ENCODE measurements at regions of chr19 and their contacts with region 1.

Region 1: DNA sequence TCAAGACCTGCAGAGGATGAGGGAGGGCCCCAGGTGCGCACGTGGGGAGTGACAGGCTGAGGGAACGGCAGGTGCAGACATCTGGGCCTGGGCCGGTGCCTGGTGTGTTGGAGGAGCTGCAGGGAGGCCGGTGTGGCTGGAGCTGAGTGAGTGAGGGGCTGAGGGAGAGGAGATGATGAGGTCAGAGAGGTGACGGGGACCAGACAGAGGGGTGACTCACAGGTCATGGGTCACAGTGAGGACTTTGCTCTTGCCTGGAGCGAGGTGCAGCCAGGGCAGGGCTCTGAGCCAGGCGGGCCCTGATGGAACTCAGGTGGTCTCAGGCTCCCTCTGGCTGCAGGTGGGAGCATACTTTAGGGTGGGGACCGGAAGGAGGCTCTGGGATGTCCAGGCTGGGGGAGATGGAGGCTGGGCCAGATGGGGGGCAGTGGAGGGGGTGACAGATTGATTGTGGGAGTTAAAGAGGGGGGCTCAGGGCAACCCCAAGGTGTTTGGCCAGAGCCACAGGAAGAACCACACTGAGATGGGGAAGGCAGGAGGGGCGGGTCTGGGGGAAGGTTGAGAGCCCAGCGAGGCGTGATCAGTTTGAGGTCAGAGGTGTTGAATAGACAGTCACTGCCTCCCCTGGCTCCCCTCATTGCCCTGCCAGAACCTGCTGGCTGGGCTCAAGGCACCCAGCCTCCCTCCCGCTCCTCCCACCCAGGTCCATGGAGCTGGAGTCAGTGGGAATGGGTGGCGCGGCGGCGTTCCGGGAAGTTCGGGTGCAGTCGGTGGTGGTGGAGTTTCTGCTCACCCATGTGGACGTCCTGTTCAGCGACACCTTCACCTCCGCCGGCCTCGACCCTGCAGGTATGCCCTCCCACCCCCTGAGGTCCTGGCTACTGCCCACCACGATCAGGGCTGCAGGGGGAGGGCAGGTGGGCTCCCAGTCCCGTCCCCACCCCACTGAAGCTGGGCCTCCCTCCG is 8.4 kb downstream of the ARHGAP33 start:
- DNase-seq: peak; percentile 64
- ATAC-seq: peak; percentile 39
- H3K4me3 Mint-ChIP-seq: peak overlapping the region; percentile 65
- H3K27ac Mint-ChIP-seq: peak overlapping the region; percentile 5; the same call in 1 of the 2 replicates
- H3K4me1 Mint-ChIP-seq: peaks cover 29% of the 10 kb centered on the region
- H3K27me3 Mint-ChIP-seq: no peaks in the 10 kb centered on the region
- CTCF ChIP-seq: no peak

Region 2: DNA sequence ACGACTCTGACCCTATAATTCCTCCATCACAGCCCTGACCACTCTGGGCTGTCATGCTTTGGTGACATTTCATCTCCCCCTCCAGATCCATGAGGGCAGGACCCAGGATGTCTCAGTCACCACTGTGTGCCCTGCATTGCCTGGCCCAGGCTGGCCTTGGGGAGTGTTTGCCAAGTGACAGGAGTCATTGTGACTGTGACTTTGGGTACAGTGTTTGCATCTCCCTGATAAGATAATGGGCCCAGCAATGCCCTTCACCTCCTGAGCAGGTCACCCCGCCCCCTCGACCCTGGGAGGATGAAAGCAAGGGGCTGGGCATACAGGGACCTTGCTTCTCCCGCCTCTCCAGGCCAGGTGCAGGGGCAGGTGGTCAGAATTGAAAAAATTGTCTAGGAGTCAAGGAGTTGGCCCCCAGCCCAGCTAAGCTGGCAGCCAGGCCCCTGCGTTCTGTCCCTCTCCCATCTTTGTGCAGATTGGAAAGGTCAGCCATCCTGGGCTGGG is 214.4 kb before region 1 on chr19:
- CTCF ChIA-PET with region 1: no interaction called
- POLR2A ChIA-PET with region 1: no interaction called
- DNase-seq: no peak
- ATAC-seq: no peak
- H3K4me3 Mint-ChIP-seq: no peak overlapping the region
- H3K27ac Mint-ChIP-seq: no peak overlapping the region
- H3K4me1 Mint-ChIP-seq: peaks cover 7% of the 10 kb centered on the region
- H3K27me3 Mint-ChIP-seq: peaks cover 18% of the 10 kb centered on the region
- CTCF ChIP-seq: no peak

Region 3: GRCh38 chr19:35618857-35619256 is 164.9 kb before region 1 on chr19:
- CTCF ChIA-PET with region 1: no interaction called
- POLR2A ChIA-PET with region 1: no interaction called
- DNase-seq: peak; percentile 52
- ATAC-seq: peak; percentile 77
- H3K4me3 Mint-ChIP-seq: no peak overlapping the region
- H3K27ac Mint-ChIP-seq: no peak overlapping the region
- H3K4me1 Mint-ChIP-seq: no peaks in the 10 kb centered on the region
- H3K27me3 Mint-ChIP-seq: no peaks in the 10 kb centered on the region
- CTCF ChIP-seq: no peak

Region 4: GRCh38 chr19:35702223-35703012 is 81.3 kb before region 1 on chr19:
- CTCF ChIA-PET with region 1: interaction called, 11 read pairs
- POLR2A ChIA-PET with region 1: interaction called, 3 read pairs
- DNase-seq: peak; percentile 96
- ATAC-seq: peak; percentile 96
- H3K4me3 Mint-ChIP-seq: peak overlapping the region; percentile 85
- H3K27ac Mint-ChIP-seq: peak overlapping the region; percentile 98
- H3K4me1 Mint-ChIP-seq: no peaks in the 10 kb centered on the region; the same call in 1 of the 2 replicates
- H3K27me3 Mint-ChIP-seq: peaks cover 44% of the 10 kb centered on the region
- CTCF ChIP-seq: no peak

Region 5: GRCh38 chr19:35729763-35730162 is 54.0 kb before region 1 on chr19:
- CTCF ChIA-PET with region 1: no interaction called
- POLR2A ChIA-PET with region 1: no interaction called
- DNase-seq: no peak
- ATAC-seq: no peak
- H3K4me3 Mint-ChIP-seq: no peak overlapping the region
- H3K27ac Mint-ChIP-seq: no peak overlapping the region
- H3K4me1 Mint-ChIP-seq: 0 out of 2 replicates have a peak, but pooled peaks cover 2% of the 10 kb centered on the region
- H3K27me3 Mint-ChIP-seq: no peaks in the 10 kb centered on the region
- CTCF ChIP-seq: no peak

Region 6: GRCh38 chr19:35748106-35749020 is 35.4 kb before region 1 on chr19 and contains the start of gene LIN37:
- CTCF ChIA-PET with region 1: interaction called, 41 read pairs
- POLR2A ChIA-PET with region 1: interaction called, 6 read pairs
- DNase-seq: peak; percentile 99
- ATAC-seq: peak; percentile 84
- H3K4me3 Mint-ChIP-seq: peak within 1 kb of the TSS; percentile 96
- H3K27ac Mint-ChIP-seq: peak within 1 kb of the TSS; percentile 85
- H3K4me1 Mint-ChIP-seq: peaks cover 21% of the 10 kb centered on the region
- H3K27me3 Mint-ChIP-seq: no peaks in the 10 kb centered on the region; the same call in 1 of the 2 replicates
- CTCF ChIP-seq: no peak
- total RNA-seq, gene LIN37: 4.7 to 6.4 TPM (median 5.6 TPM) in 3 replicates

Region 7: DNA sequence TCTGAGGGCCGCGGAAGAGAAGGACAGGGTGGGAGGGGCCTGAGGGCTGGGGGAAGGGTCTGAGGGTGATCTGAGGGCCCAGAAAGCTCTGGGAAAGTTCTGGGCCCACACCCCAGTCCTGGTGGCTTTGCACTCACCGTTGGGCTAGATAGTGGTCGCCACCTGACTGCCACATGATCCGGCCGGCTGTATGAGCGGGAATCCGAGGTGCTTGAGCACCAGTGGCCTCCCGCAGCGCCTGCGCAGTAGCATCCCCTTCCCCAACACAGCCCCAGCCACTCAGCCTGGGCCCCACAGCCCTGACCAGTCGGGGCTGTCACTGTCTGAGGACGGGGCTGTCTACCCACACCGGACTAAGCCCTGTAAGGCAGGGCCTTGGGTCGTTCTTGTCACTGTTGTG is 13.9 kb after region 1 on chr19:
- CTCF ChIA-PET with region 1: interaction called, 26 read pairs
- POLR2A ChIA-PET with region 1: no interaction called
- DNase-seq: peak; percentile 69
- ATAC-seq: peak; percentile 86
- H3K4me3 Mint-ChIP-seq: peak overlapping the region; percentile 69
- H3K27ac Mint-ChIP-seq: no peak overlapping the region
- H3K4me1 Mint-ChIP-seq: peaks cover 12% of the 10 kb centered on the region
- H3K27me3 Mint-ChIP-seq: peaks cover 55% of the 10 kb centered on the region
- CTCF ChIP-seq: no peak

Region 8: DNA sequence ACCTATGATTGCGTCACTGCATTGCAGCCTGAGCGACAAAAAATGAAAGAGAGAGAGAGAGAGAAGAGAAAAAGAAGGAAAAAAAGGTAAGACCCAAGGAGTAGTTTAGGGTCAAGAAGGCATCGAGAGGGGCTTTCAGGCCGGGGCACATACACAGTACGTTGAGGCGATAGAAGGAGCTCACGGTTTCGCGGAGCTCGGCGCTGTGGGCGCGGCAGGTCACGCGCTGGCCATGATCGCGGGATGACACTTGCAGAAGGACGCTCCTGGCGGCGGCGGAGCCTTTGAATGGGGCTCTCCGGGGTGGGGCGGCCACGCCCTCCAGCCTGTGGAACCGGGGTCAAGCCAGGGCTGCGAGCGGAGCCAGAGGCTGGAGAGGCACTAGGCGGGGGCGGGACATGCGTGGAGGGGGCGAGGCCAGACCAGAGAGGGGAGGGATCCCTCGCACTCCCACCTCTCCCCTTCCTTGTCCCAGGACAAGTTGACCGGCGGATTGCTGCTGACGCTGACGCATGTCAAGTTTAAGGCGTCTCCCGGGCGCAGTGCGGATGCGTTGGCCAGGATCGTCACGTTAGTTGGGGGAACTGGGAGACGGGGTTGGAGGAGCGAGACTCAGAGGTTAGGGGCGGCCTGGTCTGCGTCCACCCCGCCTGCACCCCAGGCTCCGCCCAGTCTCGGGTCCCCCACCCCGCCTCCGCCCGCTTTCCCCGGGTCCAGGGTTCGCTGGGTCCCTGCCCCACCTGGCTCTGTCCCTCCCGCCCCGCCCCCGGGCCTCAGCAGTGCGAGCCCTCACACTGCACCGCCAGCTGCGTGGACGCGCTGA is 61.7 kb after region 1 on chr19:
- CTCF ChIA-PET with region 1: interaction called, 17 read pairs
- POLR2A ChIA-PET with region 1: no interaction called
- DNase-seq: peak; percentile 61
- ATAC-seq: peak; percentile 37
- H3K4me3 Mint-ChIP-seq: peak overlapping the region; percentile 76
- H3K27ac Mint-ChIP-seq: no peak overlapping the region
- H3K4me1 Mint-ChIP-seq: peaks cover 22% of the 10 kb centered on the region
- H3K27me3 Mint-ChIP-seq: peaks cover 93% of the 10 kb centered on the region
- CTCF ChIP-seq: no peak

Region 9: DNA sequence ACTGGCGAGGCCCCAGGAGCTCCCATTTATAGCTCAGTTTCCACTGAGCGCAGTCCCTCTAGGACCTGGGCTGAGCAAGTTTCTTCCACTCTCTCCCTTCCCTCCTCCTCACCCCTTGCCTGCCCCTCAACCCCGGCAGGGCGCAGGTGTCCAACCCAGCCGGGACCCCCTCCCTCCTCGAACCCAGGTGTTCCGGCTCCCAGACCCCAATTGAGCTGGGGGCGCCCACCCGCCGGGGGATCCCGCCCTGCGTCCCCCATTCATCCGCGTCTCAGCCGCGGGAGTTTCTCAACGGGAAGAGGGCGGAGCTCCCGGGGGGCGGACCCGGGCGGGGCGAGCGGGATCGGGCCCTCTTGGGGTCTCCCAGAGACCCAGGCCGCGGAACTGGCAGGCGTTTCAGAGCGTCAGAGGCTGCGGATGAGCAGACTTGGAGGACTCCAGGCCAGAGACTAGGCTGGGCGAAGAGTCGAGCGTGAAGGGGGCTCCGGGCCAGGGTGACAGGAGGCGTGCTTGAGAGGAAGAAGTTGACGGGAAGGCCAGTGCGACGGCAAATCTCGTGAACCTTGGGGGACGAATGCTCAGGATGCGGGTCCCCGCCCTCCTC is 72.9 kb after region 1 on chr19 and contains the start of gene KIRREL2:
- CTCF ChIA-PET with region 1: interaction called, 25 read pairs
- POLR2A ChIA-PET with region 1: no interaction called
- DNase-seq: peak; percentile 72
- ATAC-seq: peak; percentile 9
- H3K4me3 Mint-ChIP-seq: peak within 1 kb of the TSS; percentile 91
- H3K27ac Mint-ChIP-seq: no peak within 1 kb of the TSS
- H3K4me1 Mint-ChIP-seq: peaks cover 32% of the 10 kb centered on the region
- H3K27me3 Mint-ChIP-seq: peaks cover 90% of the 10 kb centered on the region
- CTCF ChIP-seq: no peak
- total RNA-seq, gene KIRREL2: 4.7 to 5.3 TPM (median 4.9 TPM) in 3 replicates